Activated B cell treated with CpG ODN at 0.5 μM for 24 hours (primary cell): ENCODE measurements at regions of chr9 and their contacts with region 1.

Region 1: DNA sequence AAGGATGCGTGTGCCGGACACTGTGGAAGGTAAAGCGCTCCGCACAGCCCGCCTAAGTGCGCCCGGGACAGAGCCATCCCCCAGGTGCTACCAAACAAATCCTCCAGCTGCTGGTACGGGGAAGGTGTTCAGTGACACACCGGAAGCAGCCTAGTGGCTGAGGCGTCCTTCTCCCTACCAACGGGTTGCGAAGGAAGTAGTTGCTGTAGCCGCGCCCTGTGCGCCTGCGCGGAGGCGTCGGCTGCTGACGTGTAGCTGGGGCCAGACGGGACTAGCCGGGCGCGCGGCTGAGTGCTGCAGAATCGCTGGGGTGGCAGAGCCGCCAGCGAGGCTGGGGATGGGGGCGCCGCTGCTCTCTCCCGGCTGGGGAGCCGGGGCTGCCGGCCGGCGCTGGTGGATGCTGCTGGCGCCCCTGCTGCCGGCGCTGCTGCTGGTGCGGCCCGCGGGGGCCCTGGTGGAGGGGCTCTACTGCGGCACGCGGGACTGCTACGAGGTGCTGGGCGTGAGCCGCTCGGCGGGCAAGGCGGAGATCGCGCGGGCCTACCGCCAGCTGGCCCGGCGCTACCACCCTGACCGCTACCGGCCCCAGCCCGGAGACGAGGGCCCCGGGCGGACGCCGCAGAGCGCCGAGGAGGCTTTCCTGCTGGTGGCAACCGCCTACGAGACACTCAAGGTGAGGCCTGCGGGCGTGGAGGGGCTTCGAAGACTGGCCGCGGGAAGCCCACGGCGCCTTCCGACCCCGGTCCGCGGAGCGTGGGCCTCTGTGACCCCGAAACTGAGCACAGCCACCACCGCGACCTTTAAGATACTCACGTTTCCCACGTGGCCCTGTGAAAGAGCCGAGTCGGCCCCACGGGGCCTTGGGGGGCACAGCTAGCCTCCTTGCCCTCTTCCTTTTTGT is at the start of gene DNAJC25:
- DNase-seq: peak; percentile 91
- ATAC-seq: peak; percentile 94
- H3K4me3 Mint-ChIP-seq: peak within 1 kb of the TSS; percentile 95
- H3K27ac Mint-ChIP-seq: peak within 1 kb of the TSS; percentile 89
- H3K4me1 Mint-ChIP-seq: peaks cover 29% of the 10 kb centered on the region
- H3K27me3 Mint-ChIP-seq: no peaks in the 10 kb centered on the region
- CTCF ChIP-seq: no peak
- total RNA-seq, gene DNAJC25: 3.5 and 4.3 TPM in 2 replicates

Region 2: GRCh38 chr9:111661150-111661801 is 30.0 kb after region 1 on chr9 and contains the start of gene GNG10:
- CTCF ChIA-PET with region 1: no interaction called
- POLR2A ChIA-PET with region 1: interaction called, 17 read pairs
- intact Hi-C with region 1: loop called (anchors 1 kb)
- DNase-seq: peak; percentile 76
- ATAC-seq: peak; percentile 96
- H3K4me3 Mint-ChIP-seq: peak within 1 kb of the TSS; percentile 95
- H3K27ac Mint-ChIP-seq: peak within 1 kb of the TSS; percentile 85
- H3K4me1 Mint-ChIP-seq: peaks cover 27% of the 10 kb centered on the region
- H3K27me3 Mint-ChIP-seq: no peaks in the 10 kb centered on the region
- CTCF ChIP-seq: no peak
- total RNA-seq, gene GNG10: 9.3 and 10.2 TPM in 2 replicates

Region 3: DNA sequence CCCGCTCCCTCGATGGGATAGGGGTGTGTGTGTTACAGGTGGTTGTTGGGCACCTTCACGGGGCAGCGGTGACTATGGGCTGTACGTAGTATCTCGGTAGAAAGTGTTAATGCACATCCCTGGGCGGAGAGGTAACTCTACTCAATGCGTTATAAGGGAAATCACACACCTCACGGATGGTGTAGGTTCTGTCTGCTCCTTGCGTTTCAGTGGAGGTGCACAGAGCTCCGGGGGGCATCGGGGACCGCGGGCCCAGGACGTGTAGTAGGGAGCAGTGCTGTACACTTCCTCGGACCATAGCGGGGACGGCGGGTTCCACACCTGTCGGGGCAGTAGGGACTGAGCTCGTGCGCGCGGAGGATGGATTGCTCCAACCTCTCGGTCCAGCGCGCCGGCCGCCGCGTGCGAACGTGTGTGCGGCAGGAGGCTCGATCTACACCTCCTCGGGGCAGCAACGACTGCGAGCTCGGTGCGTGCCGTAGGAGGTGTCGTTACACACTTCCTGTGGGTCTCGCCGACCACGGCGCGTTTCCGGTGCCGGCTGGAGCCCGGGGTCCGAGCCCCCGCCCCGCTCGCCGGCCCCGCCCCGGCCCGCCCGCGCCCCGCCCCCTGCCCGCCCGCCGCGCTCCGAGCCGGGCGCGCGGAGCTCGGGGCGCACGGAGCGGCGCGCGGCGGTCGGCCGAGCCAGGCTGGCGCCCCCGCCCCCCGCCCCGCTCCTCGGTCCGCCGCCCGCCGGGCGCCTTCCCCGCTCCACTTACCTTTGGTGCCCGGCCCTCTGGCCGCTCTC is 855.1 kb after region 1 on chr9 and contains the start of gene KIAA1958:
- CTCF ChIA-PET with region 1: no interaction called
- POLR2A ChIA-PET with region 1: interaction called, 3 read pairs
- intact Hi-C with region 1: loop called (anchors 1 kb)
- DNase-seq: peak; percentile 75
- ATAC-seq: peak; percentile 89
- H3K4me3 Mint-ChIP-seq: peak within 1 kb of the TSS; percentile 97
- H3K27ac Mint-ChIP-seq: peak within 1 kb of the TSS; percentile 89
- H3K4me1 Mint-ChIP-seq: peaks cover 19% of the 10 kb centered on the region
- H3K27me3 Mint-ChIP-seq: no peaks in the 10 kb centered on the region
- CTCF ChIP-seq: no peak
- total RNA-seq, gene KIAA1958: 5.8 and 7.4 TPM in 2 replicates